Endothelial cell of umbilical vein (primary cell): ENCODE measurements at regions of chr9 and their contacts with region 1.

Region 1: GRCh38 chr9:136363606-136364370 is at the start of gene DNLZ:
- DNase-seq: peak; percentile 78
- H3K4me3 ChIP-seq: peak within 1 kb of the TSS; percentile 58 to 81 (median 62)
- H3K27ac ChIP-seq: peak within 1 kb of the TSS; percentile 47
- H3K4me1 ChIP-seq: peaks cover 7% of the 10 kb centered on the region
- H3K27me3 ChIP-seq: no peaks in the 10 kb centered on the region
- CTCF ChIP-seq: peak; percentile 91 to 98
- POLR2A ChIP-seq: peak; percentile 57
- total RNA-seq, gene DNLZ: 26.9 and 27.5 TPM in 2 replicates

Region 2: DNA sequence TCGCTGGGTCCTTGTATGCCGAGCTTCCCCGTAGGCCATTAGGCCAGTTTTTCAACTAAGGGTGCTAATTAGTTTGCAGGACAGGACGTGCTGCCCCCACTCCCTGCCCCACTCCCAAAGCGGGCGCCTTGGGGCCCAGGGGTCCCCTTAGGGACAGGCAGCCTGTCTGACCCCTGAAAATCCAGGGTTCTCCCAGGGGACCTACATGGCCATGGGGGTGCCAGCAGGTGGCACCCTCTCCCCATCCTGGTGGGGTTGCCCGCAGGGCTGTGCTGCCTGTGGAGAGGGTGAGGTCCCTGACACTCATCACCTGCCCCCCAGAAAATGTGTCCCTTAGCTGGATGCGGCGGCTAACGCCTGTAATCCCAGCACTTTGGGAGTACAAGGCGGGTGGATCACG is 51.4 kb before region 1 on chr9:
- CTCF ChIA-PET with region 1: interaction called, 27 read pairs
- POLR2A ChIA-PET with region 1: no interaction called
- dilution Hi-C with region 1: no loop called
- intact Hi-C with region 1: loop called (anchors 1 kb)
- DNase-seq: peak; percentile 51
- H3K4me3 ChIP-seq: no peak overlapping the region
- H3K27ac ChIP-seq: no peak overlapping the region
- H3K4me1 ChIP-seq: no peaks in the 10 kb centered on the region
- H3K27me3 ChIP-seq: no peaks in the 10 kb centered on the region
- CTCF ChIP-seq: peak; percentile 23 to 83
- POLR2A ChIP-seq: no peak

Region 3: DNA sequence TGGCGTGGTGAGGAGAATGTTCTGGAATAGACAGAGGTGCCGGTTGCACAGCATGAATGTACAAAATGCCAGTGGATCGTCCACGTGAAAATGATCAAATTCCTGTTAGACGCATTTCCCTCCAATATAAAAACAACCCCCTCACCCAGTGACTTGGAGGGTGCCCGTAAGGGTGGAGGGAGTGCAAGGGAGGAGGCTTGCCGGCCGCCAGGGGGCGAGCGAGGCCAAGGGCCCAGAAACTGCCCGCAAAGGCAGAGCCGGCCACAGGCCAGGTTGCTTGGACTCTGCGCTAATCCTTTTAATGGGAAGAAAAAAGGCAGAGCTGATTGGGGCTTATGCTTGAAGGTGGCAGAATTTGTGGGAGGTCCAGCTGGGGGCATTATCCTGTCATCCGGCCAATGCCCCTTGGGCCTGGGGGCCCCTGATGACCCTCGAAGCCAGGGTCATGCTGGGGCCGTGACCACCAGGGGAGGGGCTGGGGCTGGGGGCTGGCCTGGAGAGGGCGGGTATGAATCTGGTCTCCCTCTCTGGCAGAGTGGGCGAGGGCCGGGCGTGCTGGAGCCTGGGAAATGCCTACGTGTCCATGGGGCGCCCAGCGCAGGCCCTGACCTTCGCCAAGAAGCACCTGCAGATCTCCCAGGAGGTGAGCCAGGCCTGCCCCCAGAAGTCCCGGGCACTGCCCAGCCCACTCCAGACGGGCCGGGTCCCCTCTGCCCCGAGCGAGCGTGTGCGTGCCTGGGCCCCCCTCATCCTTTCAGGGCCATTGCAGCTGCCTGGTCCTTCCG is 24.4 kb before region 1 on chr9:
- CTCF ChIA-PET with region 1: interaction called, 25 read pairs
- POLR2A ChIA-PET with region 1: no interaction called
- dilution Hi-C with region 1: no loop called
- intact Hi-C with region 1: loop called (anchors 1 kb)
- DNase-seq: peak; percentile 49
- H3K4me3 ChIP-seq: no peak overlapping the region
- H3K27ac ChIP-seq: no peak overlapping the region
- H3K4me1 ChIP-seq: peaks cover 5% of the 10 kb centered on the region
- H3K27me3 ChIP-seq: no peaks in the 10 kb centered on the region
- CTCF ChIP-seq: peak; percentile 92 to 94
- POLR2A ChIP-seq: no peak

Region 4: GRCh38 chr9:136345281-136346156 is 18.3 kb before region 1 on chr9:
- CTCF ChIA-PET with region 1: interaction called, 25 read pairs
- POLR2A ChIA-PET with region 1: interaction called, 5 read pairs
- dilution Hi-C with region 1: no loop called
- intact Hi-C with region 1: loop called (anchors 1 kb)
- DNase-seq: peak; percentile 35
- H3K4me3 ChIP-seq: no peak overlapping the region
- H3K27ac ChIP-seq: no peak overlapping the region
- H3K4me1 ChIP-seq: peaks cover 10% of the 10 kb centered on the region
- H3K27me3 ChIP-seq: no peaks in the 10 kb centered on the region
- CTCF ChIP-seq: peak; percentile 39 to 71
- POLR2A ChIP-seq: no peak

Region 5: DNA sequence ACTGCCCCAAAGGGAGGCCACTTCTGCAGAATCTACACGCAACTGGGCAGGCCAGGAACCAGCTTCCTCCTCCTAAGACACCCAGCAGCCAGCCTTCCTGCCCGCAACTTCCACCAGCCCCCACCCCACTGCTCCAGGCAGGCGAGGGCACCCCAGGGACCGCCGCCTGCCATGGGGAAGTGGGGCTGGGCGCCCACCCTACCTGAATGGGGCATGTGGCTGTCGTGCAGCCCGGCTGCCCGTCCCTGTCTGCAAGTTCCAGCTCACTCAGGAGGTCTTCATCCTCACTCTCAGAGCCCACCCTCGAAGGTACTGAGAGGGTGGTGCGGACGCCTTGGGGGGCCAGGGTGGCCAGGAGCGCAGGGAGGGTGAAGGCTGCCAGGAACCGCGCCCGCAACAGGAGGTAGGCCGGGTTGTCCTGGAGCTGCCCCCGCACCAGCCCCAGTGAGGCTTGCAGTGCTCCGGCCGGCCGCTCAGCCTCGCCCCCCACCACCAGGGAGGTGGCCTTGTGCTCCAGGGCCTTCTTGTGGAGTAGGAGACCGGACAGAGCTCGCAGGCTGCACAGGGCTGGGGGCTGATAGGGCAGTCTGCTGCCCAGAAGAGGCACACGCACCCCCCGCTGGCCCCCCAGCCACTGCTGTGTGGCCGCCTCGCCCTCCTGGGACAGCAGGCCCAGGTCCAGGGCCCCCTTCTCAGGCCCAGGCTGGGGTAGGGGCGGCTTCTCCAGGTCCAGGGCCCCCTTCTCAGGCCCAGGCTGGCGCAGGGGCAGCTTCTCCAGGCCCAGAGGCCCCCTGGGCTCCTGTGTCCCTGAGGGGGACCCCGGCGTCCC is 13.8 kb after region 1 on chr9:
- CTCF ChIA-PET with region 1: interaction called, 10 read pairs
- POLR2A ChIA-PET with region 1: no interaction called
- dilution Hi-C with region 1: no loop called
- intact Hi-C with region 1: no loop called
- DNase-seq: no peak
- H3K4me3 ChIP-seq: no peak overlapping the region
- H3K27ac ChIP-seq: no peak overlapping the region
- H3K4me1 ChIP-seq: no peaks in the 10 kb centered on the region
- H3K27me3 ChIP-seq: no peaks in the 10 kb centered on the region
- CTCF ChIP-seq: no peak
- POLR2A ChIP-seq: no peak

Region 6: GRCh38 chr9:136400038-136400834 is 36.4 kb after region 1 on chr9 and contains the start of gene SNAPC4:
- CTCF ChIA-PET with region 1: interaction called, 7 read pairs
- POLR2A ChIA-PET with region 1: no interaction called
- dilution Hi-C with region 1: no loop called
- intact Hi-C with region 1: loop called (anchors 1 kb)
- DNase-seq: peak; percentile 82
- H3K4me3 ChIP-seq: peak within 1 kb of the TSS; percentile 55 to 96 (median 62)
- H3K27ac ChIP-seq: peak within 1 kb of the TSS; percentile 27
- H3K4me1 ChIP-seq: peaks cover 10% of the 10 kb centered on the region
- H3K27me3 ChIP-seq: no peaks in the 10 kb centered on the region
- CTCF ChIP-seq: peak; percentile 88 to 97
- POLR2A ChIP-seq: peak; percentile 90
- total RNA-seq, gene SNAPC4: 14.7 and 17.5 TPM in 2 replicates

Region 7: DNA sequence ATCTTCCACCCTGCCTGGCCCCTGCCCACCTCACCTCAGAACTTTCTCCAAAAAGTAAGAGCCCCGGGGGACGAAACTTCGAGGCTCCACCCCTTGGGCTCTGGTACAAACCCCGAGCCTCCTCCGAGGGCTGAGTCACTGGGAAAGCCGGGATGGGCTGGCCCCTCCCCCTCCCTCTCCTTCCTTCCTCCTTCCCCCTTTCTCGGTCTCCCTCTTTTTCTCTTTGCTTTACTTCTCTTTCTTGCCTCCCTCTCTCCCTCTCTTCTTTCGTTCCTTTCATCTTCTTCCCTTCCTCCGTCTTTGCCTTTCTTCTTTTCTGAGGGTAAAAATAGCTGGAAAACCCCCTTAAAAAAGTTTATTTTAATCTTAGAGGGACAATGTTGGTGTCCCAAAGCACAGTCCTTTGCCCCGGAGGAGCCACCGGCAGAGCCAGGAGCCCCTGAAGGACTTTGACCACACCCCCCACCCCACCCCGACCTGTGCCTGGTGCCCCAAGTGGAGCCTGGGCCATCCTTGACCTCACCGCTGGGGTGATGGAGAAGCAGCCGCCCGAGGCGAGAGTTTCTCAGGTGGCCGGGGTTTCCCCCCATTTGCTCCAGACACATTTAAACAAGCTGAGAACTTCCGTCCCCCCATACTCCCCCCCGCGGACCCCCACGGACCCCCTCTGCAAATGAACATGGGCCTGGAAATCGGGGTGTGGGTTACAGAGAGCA is 187.8 kb after region 1 on chr9:
- CTCF ChIA-PET with region 1: no interaction called
- POLR2A ChIA-PET with region 1: no interaction called
- dilution Hi-C with region 1: no loop called
- intact Hi-C with region 1: no loop called
- DNase-seq: peak; percentile 56
- H3K4me3 ChIP-seq: no peak overlapping the region
- H3K27ac ChIP-seq: peak overlapping the region; percentile 15
- H3K4me1 ChIP-seq: peaks cover 17% of the 10 kb centered on the region
- H3K27me3 ChIP-seq: no peaks in the 10 kb centered on the region
- CTCF ChIP-seq: no peak
- POLR2A ChIP-seq: no peak

Region 8: DNA sequence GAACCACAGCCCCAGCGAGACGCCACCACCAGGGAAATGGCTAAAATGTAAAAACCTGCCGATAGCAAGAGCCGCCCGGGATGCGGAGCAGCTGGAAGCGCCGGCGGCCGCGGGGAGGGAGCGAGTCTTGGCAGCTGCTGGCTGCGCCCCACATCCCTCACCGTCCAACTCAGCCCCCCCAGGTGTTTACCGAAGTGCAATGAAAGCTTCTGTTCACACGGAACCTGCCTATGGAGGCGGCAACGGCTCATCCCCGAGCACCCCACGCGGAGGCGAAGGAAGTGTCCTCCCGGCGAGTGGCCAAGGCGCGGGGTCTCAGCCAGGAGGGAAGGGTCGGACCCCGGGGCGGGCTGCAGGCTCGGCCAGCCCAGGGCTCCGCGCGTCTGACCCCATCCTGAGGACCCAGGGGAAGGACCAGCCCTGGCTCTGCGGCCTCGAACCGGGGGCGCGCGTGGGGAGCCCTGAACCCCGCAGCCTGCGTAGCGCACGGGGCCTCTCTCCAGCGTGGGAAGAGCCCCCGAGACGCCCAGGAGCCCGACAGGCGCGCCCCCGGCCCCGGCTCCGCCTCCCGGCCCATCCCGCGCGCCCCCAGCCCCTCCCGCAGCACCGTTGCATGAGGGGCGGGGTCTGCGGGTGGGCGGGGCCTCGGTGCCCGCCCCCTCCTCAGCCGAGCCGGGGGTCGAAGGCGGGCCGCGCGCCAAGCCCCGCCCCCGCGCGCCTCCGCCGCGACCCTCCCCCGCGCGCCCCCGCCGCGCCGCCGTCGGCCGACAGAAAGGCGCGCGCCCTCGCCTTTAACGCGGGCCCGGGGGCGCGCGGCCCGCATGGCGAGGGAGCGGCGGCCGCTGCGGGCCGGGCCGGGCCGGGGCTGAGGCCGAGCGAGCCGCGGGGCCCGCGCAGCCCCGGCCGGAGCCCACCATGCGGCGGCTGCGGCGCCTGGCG is 348.2 kb after region 1 on chr9 and contains the start of gene DIPK1B:
- CTCF ChIA-PET with region 1: no interaction called
- POLR2A ChIA-PET with region 1: no interaction called
- dilution Hi-C with region 1: no loop called
- intact Hi-C with region 1: loop called (anchors 2 kb)
- DNase-seq: peak; percentile 48
- H3K4me3 ChIP-seq: peak within 1 kb of the TSS; percentile 68 to 81 (median 75)
- H3K27ac ChIP-seq: peak within 1 kb of the TSS; percentile 96
- H3K4me1 ChIP-seq: peaks cover 27% of the 10 kb centered on the region
- H3K27me3 ChIP-seq: no peaks in the 10 kb centered on the region
- CTCF ChIP-seq: no peak
- POLR2A ChIP-seq: no peak
- total RNA-seq, gene DIPK1B: 242 and 253 TPM in 2 replicates